Endothelial cell of umbilical vein (primary cell): ENCODE measurements at regions of chr20 and their contacts with region 1.

Region 1: DNA sequence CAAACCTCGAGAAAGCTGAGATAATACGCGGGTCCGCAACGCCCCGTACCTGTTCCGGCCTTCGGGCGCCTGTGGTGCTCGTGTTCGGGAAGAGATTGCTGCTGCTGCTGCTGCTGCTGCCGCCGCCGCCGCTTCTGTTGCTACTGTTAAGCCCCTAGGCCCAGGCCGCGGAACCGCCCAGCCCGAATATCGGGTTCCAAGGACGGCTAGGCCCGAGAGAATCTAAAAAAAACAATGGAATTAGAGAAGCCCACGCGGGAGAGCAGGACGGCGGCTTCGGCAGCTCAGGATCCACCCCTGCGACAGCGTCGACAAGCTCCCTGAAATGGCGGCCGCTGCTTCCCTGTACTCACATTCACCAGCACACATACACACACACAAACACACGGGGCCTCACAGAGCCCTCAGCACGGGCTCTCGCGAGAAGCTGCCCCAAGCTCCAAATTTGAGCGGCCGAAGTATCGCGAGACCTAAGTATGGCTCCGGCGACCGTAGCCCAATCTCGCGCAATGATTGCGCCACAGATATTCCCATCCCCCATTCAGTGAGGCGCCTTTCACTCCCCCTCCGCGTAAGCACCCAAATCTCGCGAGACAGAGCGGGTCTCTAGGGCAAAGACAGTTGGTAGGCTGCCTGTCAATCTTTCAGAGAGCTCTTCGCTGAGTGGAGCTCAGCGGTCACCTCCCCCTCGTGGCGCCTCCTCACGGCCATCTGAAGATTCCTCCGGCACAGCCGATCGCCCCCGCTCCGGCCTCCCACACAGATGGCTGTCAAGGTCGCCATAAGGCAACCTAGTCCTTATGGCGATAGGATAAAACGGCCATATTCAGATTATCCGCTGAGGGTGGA is at the start of gene RBM39:
- DNase-seq: peak; percentile 100
- H3K4me3 ChIP-seq: peak within 1 kb of the TSS; percentile 97 to 100 (median 99)
- H3K27ac ChIP-seq: peak within 1 kb of the TSS; percentile 97
- H3K4me1 ChIP-seq: peaks cover 39% of the 10 kb centered on the region
- H3K27me3 ChIP-seq: no peaks in the 10 kb centered on the region
- CTCF ChIP-seq: peak; percentile 21 to 58
- POLR2A ChIP-seq: peak; percentile 89
- total RNA-seq, gene RBM39: 291 and 309 TPM in 2 replicates

Region 2: DNA sequence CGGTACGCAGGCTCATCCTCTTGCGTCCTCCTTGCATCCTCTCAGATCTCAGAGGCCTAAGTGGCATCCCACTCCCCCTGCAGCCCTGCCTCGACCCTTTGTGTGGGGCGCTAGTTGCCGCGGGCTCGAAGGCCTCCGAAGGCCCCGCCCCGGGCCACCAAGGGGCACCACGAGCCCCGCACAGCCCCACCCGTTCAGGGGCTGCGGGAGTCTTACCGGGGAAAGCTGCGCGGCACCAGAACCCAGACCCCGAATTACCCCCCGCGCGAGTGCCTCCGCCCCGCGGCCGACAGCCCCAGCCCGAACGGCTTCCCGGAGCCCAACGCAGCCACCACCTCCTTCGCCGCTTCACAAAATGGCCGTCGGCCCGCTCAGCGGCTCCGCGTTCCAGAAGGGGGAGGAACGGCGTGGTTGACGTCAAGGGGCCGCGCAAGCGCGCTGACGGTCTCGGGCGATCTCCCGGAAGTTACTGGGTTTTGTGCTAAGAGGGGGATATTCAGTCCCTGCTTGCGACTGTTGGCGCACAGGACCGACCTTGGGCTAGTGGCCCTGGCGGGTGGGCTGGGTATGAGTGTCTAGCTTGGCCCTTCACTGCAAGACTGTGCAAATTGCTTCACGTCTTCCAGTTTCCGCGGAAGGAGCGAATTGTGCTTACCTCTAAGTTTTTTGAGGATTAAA is 77.4 kb before region 1 on chr20 and contains the starts of genes CPNE1 and RBM12:
- CTCF ChIA-PET with region 1: interaction called, 3 read pairs
- POLR2A ChIA-PET with region 1: interaction called, 5 read pairs
- dilution Hi-C with region 1: no loop called
- intact Hi-C with region 1: loop called (anchors 5 kb)
- DNase-seq: peak; percentile 94
- H3K4me3 ChIP-seq: peak within 1 kb of the TSS; percentile 13 to 81 (median 78)
- H3K27ac ChIP-seq: peak within 1 kb of the TSS; percentile 33
- H3K4me1 ChIP-seq: peaks cover 19% of the 10 kb centered on the region
- H3K27me3 ChIP-seq: no peaks in the 10 kb centered on the region
- CTCF ChIP-seq: peak in 1 of 2 donors; percentile 6
- POLR2A ChIP-seq: peak; percentile 95
- total RNA-seq, gene CPNE1: 239 and 244 TPM in 2 replicates
- total RNA-seq, gene RBM12: 98.0 and 105 TPM in 2 replicates

Region 3: DNA sequence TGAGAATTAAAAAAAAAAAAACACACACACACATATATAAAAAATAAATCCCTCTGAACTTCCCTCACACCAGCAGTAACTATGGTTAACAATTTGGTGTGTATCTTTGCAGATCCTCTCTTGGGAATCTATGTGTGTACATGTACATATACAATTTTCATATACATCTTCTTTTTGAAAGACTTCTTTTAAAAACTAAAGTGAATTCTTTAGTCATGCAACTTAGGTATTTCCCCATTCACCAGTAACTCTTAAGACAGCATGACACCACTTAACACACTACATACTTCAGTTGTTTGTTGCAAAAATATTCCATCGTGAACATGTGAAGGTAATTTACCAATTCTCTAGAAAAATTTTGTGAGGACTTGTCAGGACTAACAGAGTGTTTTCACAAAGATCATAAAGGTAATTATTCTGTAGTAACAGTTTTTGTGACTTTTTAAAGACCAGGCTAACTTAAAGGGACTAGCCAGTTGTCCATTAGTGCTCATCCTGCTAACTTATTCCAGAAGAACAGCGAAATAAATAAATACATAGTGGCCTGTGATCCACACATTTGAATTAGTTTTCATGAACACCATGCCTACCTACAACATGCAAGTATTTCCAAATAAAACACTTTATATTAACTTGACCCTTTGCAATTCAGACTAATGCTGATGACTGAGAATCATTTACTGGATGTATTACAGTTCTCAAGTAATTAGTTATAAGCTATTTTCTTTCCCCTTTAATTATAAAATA is 12.1 kb before region 1 on chr20:
- CTCF ChIA-PET with region 1: interaction called, 5 read pairs
- POLR2A ChIA-PET with region 1: interaction called, 22 read pairs
- dilution Hi-C with region 1: no loop called
- intact Hi-C with region 1: no loop called
- DNase-seq: no peak
- H3K4me3 ChIP-seq: no peak overlapping the region
- H3K27ac ChIP-seq: no peak overlapping the region
- H3K4me1 ChIP-seq: peaks cover 5% of the 10 kb centered on the region
- H3K27me3 ChIP-seq: no peaks in the 10 kb centered on the region
- CTCF ChIP-seq: no peak
- POLR2A ChIP-seq: no peak

Region 4: DNA sequence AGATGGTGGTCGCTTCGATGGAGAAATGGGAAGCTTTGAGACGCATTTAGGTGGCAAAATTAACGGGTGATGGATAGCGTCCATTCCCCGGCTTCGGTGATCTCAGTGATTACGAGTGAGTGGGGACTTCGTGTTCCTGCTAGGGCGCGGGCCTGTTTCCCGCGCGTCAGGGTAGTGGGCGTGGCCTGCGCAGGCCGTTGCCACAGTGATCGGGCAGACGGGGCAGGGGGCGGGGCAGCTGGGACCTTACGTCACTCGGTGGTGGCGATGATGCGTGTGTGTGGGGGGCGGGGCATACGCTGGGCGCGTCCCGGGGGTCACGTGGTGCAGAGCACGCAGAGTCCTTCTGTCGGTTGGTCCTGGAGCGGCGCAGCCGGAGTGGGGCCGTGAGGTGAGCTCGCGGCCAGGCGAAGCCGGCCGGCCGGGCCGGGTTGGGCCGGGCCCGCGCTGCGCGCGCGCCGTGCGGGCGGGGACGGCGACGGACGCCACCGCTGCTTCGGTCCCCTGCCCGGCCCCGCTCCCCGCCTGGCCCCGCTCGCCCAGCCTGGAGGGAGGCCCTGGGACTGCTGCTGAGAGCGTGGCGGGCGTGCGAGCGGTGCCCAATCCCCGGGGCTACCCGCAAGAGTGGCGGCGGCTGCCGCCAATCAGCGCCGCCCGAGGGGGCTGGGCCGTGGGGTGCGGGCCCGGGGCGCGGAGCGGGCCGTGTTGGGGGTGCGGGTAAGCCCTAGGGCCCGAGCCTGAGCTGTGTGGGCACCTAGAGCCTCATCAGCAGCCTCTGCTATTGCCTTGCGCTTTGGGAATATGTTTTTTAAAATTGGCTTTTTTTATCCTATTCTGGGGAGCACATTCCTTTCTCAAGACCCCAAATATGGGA is 29.8 kb after region 1 on chr20 and contains the start of gene PHF20:
- CTCF ChIA-PET with region 1: interaction called, 16 read pairs
- POLR2A ChIA-PET with region 1: interaction called, 47 read pairs
- dilution Hi-C with region 1: no loop called
- intact Hi-C with region 1: loop called (anchors 1 kb)
- DNase-seq: peak; percentile 96
- H3K4me3 ChIP-seq: peak within 1 kb of the TSS; percentile 70 to 83 (median 76)
- H3K27ac ChIP-seq: peak within 1 kb of the TSS; percentile 87
- H3K4me1 ChIP-seq: peaks cover 42% of the 10 kb centered on the region
- H3K27me3 ChIP-seq: no peaks in the 10 kb centered on the region
- CTCF ChIP-seq: no peak
- POLR2A ChIP-seq: peak; percentile 80
- total RNA-seq, gene PHF20: 45.8 and 46.3 TPM in 2 replicates

Region 5: DNA sequence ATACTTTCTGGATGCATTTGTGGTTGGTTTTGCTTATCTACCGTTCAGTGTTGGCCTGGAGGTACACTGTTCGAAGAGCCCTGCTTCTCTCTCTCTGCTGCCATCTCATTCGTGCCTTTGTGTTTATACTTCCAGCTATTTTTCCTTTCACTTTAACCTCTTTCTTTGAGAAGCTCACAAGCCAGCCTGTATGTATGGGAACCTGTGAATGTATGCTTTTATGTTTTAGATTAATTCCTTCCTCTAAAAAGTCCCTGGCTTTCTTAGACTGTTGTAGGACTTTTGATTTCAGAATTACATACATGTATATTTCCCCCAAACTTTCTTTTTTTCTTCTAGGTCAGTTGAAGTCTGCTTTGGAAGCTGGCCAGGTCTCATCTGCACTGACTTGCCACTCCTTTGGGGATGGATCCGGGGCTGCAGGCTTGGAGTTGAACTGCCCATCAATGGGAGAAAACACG is 129.2 kb after region 1 on chr20:
- CTCF ChIA-PET with region 1: interaction called, 5 read pairs
- POLR2A ChIA-PET with region 1: interaction called, 15 read pairs
- dilution Hi-C with region 1: no loop called
- intact Hi-C with region 1: no loop called
- DNase-seq: peak; percentile 79
- H3K4me3 ChIP-seq: peak overlapping the region in 1 of 3 experiments; percentile 42
- H3K27ac ChIP-seq: peak overlapping the region; percentile 62
- H3K4me1 ChIP-seq: peaks cover 25% of the 10 kb centered on the region
- H3K27me3 ChIP-seq: no peaks in the 10 kb centered on the region
- CTCF ChIP-seq: no peak
- POLR2A ChIP-seq: no peak

Region 6: DNA sequence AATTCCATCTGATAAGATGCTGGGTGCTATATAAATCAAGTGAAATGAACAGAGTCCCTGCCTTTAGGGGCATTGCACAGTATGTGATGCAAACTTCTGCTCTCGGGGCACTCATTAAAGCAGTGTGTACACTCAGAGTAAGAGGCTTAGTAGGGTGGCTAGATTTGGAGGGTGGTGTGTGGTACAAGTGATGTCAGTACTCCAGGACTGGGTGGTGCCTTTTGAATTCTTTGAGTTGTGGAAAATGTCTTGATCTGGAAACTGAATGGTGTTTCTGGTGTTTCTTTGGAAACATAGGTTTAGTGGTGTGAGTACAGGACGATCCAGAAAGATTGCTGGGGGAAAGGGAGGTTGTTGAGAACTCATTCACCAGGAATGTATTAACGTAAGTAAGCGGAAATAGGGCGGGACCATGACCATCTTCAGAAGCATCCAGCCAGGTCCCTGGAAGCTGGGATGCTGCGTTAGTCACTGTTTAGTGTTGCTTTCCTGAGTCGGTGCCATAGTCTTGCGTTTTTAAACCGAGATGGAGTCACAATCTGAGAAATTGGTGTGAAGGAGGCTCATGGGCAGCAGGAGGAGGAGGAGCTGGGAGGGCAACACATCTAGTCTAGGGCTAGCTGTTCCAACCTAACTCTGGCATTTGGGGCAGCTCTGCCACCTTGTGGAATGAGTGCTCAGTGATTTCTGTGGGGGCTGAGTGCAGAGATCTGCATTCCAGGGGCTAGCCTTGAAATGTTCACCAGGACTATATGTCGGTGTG is 141.8 kb after region 1 on chr20:
- CTCF ChIA-PET with region 1: interaction called, 29 read pairs
- POLR2A ChIA-PET with region 1: interaction called, 11 read pairs
- dilution Hi-C with region 1: no loop called
- intact Hi-C with region 1: loop called (anchors 1 kb)
- DNase-seq: peak; percentile 88
- H3K4me3 ChIP-seq: peak overlapping the region in 1 of 3 experiments; percentile 1
- H3K27ac ChIP-seq: peak overlapping the region; percentile 95
- H3K4me1 ChIP-seq: peaks cover 13% of the 10 kb centered on the region
- H3K27me3 ChIP-seq: no peaks in the 10 kb centered on the region
- CTCF ChIP-seq: peak; percentile 72 to 77
- POLR2A ChIP-seq: peak; percentile 52

Region 7: GRCh38 chr20:35954200-35954906 is 212.2 kb after region 1 on chr20 and contains the start of gene SCAND1:
- CTCF ChIA-PET with region 1: interaction called, 10 read pairs
- POLR2A ChIA-PET with region 1: interaction called, 5 read pairs
- dilution Hi-C with region 1: no loop called
- intact Hi-C with region 1: loop called (anchors 1 kb)
- DNase-seq: peak; percentile 98
- H3K4me3 ChIP-seq: peak within 1 kb of the TSS; percentile 39 to 93 (median 82)
- H3K27ac ChIP-seq: peak within 1 kb of the TSS; percentile 94
- H3K4me1 ChIP-seq: peaks cover 17% of the 10 kb centered on the region
- H3K27me3 ChIP-seq: no peaks in the 10 kb centered on the region
- CTCF ChIP-seq: peak; percentile 99
- POLR2A ChIP-seq: peak; percentile 79
- total RNA-seq, gene SCAND1: 83.1 and 83.5 TPM in 2 replicates

Region 8: GRCh38 chr20:35978041-35978513 is 236.0 kb after region 1 on chr20:
- CTCF ChIA-PET with region 1: no interaction called
- POLR2A ChIA-PET with region 1: no interaction called
- dilution Hi-C with region 1: no loop called
- intact Hi-C with region 1: no loop called
- DNase-seq: no peak
- H3K4me3 ChIP-seq: no peak overlapping the region
- H3K27ac ChIP-seq: no peak overlapping the region
- H3K4me1 ChIP-seq: no peaks in the 10 kb centered on the region
- H3K27me3 ChIP-seq: peaks cover 2 to 8% of the 10 kb centered on the region in 2 experiments
- CTCF ChIP-seq: no peak
- POLR2A ChIP-seq: no peak